Activated CD4-positive, alpha-beta T cell treated with anti-CD3 and anti-CD28 coated beads for 36 hours (primary cell): ENCODE measurements at regions of chr17 and their contacts with region 1.

Region 1: GRCh38 chr17:63621766-63622519 is at the start of gene MAP3K3:
- DNase-seq: peak; percentile 98
- ATAC-seq: peak; percentile 93
- H3K4me3 Mint-ChIP-seq: peak within 1 kb of the TSS; percentile 88
- H3K27ac Mint-ChIP-seq: peak within 1 kb of the TSS; percentile 90
- H3K4me1 Mint-ChIP-seq: peaks cover 36% of the 10 kb centered on the region
- H3K27me3 Mint-ChIP-seq: no peaks in the 10 kb centered on the region
- total RNA-seq, gene MAP3K3: 22.4 to 22.9 TPM

Region 2: DNA sequence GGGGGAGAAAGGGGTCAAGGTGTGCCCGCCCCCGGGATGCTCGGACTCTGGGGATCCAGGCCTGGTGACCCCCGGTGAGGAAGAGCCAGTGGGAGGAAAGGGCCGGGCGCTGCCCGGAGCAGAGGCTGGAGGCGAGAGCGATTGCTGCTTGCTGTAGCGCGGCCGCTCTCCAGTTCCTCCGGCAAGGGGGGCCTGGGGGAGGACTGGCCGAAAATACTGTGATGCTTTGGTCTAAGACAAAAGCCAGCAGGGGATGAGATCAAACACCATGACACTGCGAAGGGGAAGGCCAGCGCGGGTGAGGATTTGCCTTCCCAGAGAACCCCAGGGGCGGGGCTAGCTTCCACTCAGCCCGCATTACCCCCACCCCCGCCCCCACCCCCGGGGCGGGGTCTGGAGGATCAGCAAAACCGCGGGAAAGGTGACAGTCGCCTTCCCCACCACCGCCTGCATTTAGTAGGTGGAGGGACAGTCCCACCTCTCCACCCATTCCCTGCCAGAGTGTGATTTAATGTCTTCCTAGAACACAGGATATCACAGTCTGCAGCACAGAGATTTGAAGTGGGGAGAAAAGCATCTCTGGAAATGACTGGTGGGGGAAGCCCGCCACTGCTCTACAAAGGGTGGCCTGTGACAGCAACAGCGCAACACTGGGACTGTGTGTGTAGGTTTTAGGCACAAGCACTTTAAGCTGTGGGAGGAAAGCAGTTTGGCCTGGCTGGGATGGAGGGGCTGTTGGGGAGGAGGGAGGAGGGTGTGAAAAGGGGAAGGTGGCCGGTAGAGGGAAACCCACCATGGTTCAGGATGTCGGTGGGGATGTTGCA is 968.7 kb before region 1 on chr17:
- CTCF ChIA-PET with region 1: no interaction called
- POLR2A ChIA-PET with region 1: no interaction called
- intact Hi-C with region 1: loop called in 1 of 2 experiments (anchors 2 kb)
- DNase-seq: peak; percentile 97
- ATAC-seq: peak; percentile 95
- H3K4me3 Mint-ChIP-seq: peak overlapping the region; percentile 65
- H3K27ac Mint-ChIP-seq: peak overlapping the region; percentile 65
- H3K4me1 Mint-ChIP-seq: peaks cover 23% of the 10 kb centered on the region
- H3K27me3 Mint-ChIP-seq: peaks cover 19% of the 10 kb centered on the region

Region 3: GRCh38 chr17:63425482-63425881 is 196.5 kb before region 1 on chr17:
- CTCF ChIA-PET with region 1: interaction called, 14 read pairs
- POLR2A ChIA-PET with region 1: interaction called, 5 read pairs
- intact Hi-C with region 1: no loop called
- DNase-seq: peak; percentile 82
- ATAC-seq: peak; percentile 93
- H3K4me3 Mint-ChIP-seq: no peak overlapping the region
- H3K27ac Mint-ChIP-seq: no peak overlapping the region
- H3K4me1 Mint-ChIP-seq: peaks cover 27% of the 10 kb centered on the region
- H3K27me3 Mint-ChIP-seq: no peaks in the 10 kb centered on the region

Region 4: DNA sequence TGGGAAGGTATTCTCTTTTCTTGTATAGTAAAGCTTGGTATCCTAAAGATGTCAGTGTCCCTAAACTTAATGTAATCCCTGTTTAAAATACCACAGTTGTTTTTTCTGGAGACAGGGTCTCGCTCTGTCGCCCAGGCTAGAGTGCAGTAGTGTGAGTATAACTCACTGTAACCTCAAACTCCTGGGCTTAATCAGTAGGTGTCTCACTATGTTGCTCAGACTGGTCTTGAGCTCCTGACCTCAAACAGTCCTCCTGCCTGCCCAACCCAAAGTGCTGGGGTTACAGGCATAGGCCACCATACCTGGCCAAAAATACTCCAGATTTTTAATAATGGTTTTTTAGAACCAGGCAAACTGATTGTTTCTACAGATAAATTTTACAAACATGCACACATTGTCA is 63.5 kb before region 1 on chr17:
- CTCF ChIA-PET with region 1: no interaction called
- POLR2A ChIA-PET with region 1: no interaction called
- intact Hi-C with region 1: no loop called
- DNase-seq: no peak
- ATAC-seq: peak; percentile 58
- H3K4me3 Mint-ChIP-seq: no peak overlapping the region
- H3K27ac Mint-ChIP-seq: no peak overlapping the region
- H3K4me1 Mint-ChIP-seq: peaks cover 65% of the 10 kb centered on the region
- H3K27me3 Mint-ChIP-seq: no peaks in the 10 kb centered on the region

Region 5: GRCh38 chr17:63600569-63601438 is 21.1 kb before region 1 on chr17 and contains the start of gene TACO1:
- CTCF ChIA-PET with region 1: no interaction called
- POLR2A ChIA-PET with region 1: interaction called, 3 read pairs
- intact Hi-C with region 1: loop called in 1 of 2 experiments (anchors 1 kb)
- DNase-seq: peak; percentile 87
- ATAC-seq: peak; percentile 94
- H3K4me3 Mint-ChIP-seq: peak within 1 kb of the TSS; percentile 97
- H3K27ac Mint-ChIP-seq: peak within 1 kb of the TSS; percentile 95
- H3K4me1 Mint-ChIP-seq: peaks cover 31% of the 10 kb centered on the region
- H3K27me3 Mint-ChIP-seq: no peaks in the 10 kb centered on the region
- total RNA-seq, gene TACO1: 25.7 to 29.2 TPM

Region 6: GRCh38 chr17:63634163-63634562 is 12.2 kb after region 1 on chr17:
- CTCF ChIA-PET with region 1: interaction called, 12 read pairs
- POLR2A ChIA-PET with region 1: no interaction called
- intact Hi-C with region 1: no loop called
- DNase-seq: no peak
- ATAC-seq: peak; percentile 19
- H3K4me3 Mint-ChIP-seq: no peak overlapping the region
- H3K27ac Mint-ChIP-seq: peak overlapping the region; percentile 73
- H3K4me1 Mint-ChIP-seq: peaks cover 20% of the 10 kb centered on the region
- H3K27me3 Mint-ChIP-seq: no peaks in the 10 kb centered on the region

Region 7: GRCh38 chr17:63741221-63742049 is 119.5 kb after region 1 on chr17 and contains the start of gene STRADA:
- CTCF ChIA-PET with region 1: no interaction called
- POLR2A ChIA-PET with region 1: interaction called, 5 read pairs
- intact Hi-C with region 1: loop called (anchors 1 kb)
- DNase-seq: peak; percentile 100
- ATAC-seq: peak; percentile 94
- H3K4me3 Mint-ChIP-seq: peak within 1 kb of the TSS; percentile 91
- H3K27ac Mint-ChIP-seq: peak within 1 kb of the TSS; percentile 95
- H3K4me1 Mint-ChIP-seq: peaks cover 29% of the 10 kb centered on the region
- H3K27me3 Mint-ChIP-seq: no peaks in the 10 kb centered on the region
- total RNA-seq, gene STRADA: 51.0 to 53.6 TPM

Region 8: DNA sequence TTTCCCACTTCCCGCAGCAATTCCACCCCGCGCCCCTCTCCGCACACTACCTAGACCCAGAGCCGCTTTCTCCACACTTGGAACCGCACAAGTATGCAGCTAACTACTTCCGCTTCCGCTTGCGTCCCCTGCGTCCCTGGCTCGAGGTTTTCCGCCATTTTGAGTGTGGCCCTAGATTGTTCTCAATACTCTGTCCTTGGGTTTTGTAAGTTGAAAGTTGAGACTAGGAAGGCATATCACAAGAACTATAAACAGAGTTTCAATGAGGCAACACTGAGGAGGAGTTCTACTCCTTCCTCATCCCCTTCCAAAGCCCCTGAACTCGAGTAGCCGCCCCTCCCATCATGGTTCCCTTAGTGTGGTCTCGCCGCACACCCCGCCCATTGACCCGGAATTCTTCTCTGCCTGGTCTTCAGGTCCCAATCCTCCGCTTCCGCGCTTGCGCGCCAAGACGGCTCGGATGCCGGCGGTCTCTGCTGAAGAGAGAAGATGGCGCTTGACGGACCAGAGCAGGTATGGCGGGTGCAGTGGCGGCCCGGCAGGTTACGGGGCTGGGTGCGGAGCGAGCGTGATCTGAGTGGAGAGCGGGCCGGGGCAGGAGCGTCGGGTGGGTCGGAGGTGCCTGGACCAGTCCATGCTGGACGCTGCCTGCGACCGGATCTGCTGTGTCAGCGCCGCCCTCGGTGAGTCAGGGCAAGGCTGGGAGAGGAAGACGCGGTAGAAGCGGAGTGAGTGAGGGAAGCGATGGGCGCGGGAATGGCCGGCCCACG is 205.2 kb after region 1 on chr17 and contains the starts of genes FTSJ3 and PSMC5:
- CTCF ChIA-PET with region 1: no interaction called
- POLR2A ChIA-PET with region 1: no interaction called
- intact Hi-C with region 1: loop called (anchors 1 to 10 kb)
- DNase-seq: peak; percentile 97
- ATAC-seq: peak; percentile 94
- H3K4me3 Mint-ChIP-seq: peak within 1 kb of the TSS; percentile 88
- H3K27ac Mint-ChIP-seq: peak within 1 kb of the TSS; percentile 99
- H3K4me1 Mint-ChIP-seq: peaks cover 72% of the 10 kb centered on the region
- H3K27me3 Mint-ChIP-seq: no peaks in the 10 kb centered on the region
- total RNA-seq, gene FTSJ3: 52.1 to 61.2 TPM
- total RNA-seq, gene PSMC5: 98.2 to 160 TPM